ENCODE measurements at regions of chr1 and their contacts with region 1.

Region 1: DNA sequence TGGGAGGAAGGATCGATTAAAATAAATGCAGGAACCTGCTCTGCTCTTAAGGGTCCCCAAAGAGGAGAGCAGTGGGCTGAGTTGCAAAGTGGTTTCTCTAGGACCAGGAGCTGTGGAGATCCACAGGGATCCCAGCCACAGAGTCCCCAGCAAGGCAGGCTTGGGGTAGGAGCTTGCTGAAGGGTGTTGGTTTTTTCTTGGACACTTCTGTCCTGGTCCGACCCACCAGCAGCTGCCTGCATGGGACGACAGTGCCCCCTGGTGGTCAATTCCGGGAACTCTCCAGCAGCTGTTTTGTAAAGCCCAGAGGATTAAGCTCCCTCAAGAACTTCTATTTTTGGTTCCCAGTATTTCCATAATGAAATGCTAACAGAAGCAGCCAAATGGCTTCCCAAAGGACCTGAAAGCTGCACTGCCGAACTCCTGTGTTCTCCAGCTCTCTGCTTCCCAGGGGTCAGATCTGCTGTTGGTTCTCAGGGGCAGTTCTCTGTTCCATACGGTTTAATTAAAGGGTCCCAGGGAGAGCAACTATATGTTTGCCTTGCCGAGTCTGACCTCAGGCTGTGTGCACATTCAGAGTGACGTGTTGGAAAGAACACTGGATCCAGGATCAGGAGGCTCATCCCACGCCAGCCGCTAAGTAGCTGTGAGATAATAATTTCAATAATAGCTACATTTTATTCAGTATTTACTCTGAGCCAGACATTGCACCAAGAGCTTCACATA is 23.2 kb downstream of the NENF start:
- DNase-seq: peak; percentile 90
- H3K4me3 ChIP-seq: peak overlapping the region; percentile 9
- H3K27ac ChIP-seq: peak overlapping the region; percentile 56
- H3K4me1 ChIP-seq: peaks cover 45% of the 10 kb centered on the region
- H3K27me3 ChIP-seq: no peaks in the 10 kb centered on the region
- CTCF ChIP-seq: peak; percentile 100

Region 2: DNA sequence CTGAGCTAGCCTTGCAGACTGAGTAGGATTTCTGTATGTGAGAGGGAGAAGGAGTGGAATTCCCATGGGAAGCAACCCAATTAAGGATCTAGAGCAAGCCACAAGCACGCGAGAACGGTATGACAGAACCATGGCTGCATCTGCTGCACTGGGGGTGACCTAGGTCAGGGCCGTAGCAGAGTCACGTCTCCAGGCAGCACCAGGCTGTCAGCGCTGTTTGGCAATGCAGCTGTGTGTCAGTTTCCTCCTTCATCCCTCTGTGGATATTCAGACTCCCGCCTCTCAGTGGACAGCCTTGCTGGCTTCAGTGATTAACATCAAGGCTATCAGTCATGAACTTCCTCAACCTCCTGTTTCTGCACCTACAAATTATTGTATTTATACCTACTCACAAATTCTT is 288.9 kb before region 1 on chr1:
- intact Hi-C with region 1: no loop called
- DNase-seq: peak; percentile 58
- H3K4me3 ChIP-seq: peak overlapping the region; percentile 28
- H3K27ac ChIP-seq: peak overlapping the region; percentile 78
- H3K4me1 ChIP-seq: peaks cover 43% of the 10 kb centered on the region
- H3K27me3 ChIP-seq: no peaks in the 10 kb centered on the region
- CTCF ChIP-seq: no peak

Region 3: DNA sequence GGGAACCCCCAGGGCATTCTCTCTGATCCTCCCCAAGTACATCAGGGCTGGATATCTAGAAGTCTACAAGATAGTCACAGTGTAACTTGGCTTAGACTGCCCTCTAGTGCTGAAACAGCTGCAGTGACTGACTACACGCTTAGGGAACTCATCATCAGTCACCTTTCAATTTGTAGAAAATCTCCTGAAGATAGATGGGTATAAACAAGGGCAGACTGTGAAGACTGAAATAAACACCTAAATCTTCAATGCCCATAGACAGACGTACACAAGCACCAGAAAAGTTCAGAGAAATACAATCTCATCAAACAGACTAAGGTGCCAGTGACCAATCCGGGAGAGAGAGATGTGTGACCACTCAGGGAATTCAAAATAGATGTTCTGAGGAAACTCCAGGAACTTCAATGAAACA is 87.9 kb before region 1 on chr1:
- intact Hi-C with region 1: loop called (anchors 10 kb)
- DNase-seq: no peak
- H3K4me3 ChIP-seq: no peak overlapping the region
- H3K27ac ChIP-seq: no peak overlapping the region
- H3K4me1 ChIP-seq: peaks cover 39% of the 10 kb centered on the region
- H3K27me3 ChIP-seq: no peaks in the 10 kb centered on the region
- CTCF ChIP-seq: peak; percentile 93